Naive thymus-derived CD4-positive, alpha-beta T cell (primary cell): ENCODE measurements at regions of chr6 and their contacts with region 1.

Region 1: DNA sequence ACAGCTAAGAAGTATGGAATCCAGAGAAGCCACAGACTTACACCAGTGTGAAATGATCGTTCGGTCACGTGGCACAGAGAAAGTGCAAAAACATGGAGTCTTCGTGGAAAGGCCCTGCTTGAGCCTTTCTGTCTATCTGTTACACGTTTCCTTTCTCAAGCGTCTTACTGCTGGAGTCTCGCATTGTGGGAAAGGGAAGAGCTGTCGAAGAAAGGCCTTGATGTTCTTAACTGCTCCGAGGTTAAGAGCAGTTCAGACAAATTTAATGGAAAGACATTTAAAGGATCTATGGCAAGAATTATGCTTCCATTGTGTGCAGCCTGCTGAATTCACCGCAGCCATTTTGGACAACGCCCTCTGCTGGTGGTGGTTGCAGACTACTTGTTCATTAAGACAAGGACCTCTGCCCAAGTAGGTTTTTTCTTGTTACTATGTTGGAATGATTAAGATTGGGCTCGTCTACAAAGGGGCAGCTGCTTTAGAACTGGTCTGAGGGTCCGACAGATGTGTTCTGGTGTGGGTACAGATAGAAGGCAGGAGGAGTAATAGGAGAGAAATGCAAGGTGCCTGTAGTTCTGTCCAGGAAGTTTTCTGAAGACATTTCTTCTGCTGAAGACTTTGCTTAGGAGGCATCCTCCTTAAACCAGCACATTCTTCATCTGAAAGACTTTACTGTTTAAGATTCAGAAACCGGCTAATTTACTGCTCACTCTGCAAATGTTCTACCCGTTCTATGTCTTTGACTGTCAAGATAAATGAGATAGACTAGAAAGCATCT is 24.7 kb upstream of the CCN6 start:
- DNase-seq: peak in 7 of 9 donors; percentile 22 to 58 (median 43)
- ATAC-seq: no peak
- H3K4me3 ChIP-seq: no peak overlapping the region
- H3K4me3 Mint-ChIP-seq: peak overlapping the region; percentile 49 to 83 (median 68)
- H3K27ac ChIP-seq: peak overlapping the region; percentile 90
- H3K27ac Mint-ChIP-seq: peak overlapping the region; percentile 95 to 100 (median 98)
- H3K4me1 ChIP-seq: peaks cover 34 to 74% of the 10 kb centered on the region in 2 donors
- H3K4me1 Mint-ChIP-seq: peaks cover 46 to 94% (median 84%) of the 10 kb centered on the region in 7 donors
- H3K27me3 ChIP-seq: no peaks in the 10 kb centered on the region
- H3K27me3 Mint-ChIP-seq: peaks cover 0 to 3% (median 0%) of the 10 kb centered on the region in 5 donors

Region 2: DNA sequence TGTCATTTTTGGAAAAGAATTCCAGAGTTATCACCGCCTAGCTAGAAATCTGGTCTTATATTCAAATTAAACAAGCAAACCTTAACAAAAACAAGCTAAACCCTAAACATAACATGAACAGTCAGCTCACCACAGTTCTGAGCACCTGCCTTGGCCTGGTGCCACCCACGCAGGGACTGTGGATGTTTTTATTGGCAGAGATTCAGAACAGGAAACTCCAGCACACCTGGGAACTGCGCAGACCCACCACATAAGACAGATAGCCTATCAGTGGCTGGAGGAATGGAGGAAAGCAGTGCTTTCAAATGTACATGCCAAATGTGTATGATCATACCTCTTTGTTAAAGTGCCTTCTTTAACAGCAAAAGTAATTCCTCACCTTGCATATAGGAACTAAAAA is 933.0 kb before region 1 on chr6:
- CTCF ChIA-PET with region 1: no interaction called
- POLR2A ChIA-PET with region 1: no interaction called
- intact Hi-C with region 1: loop called in 1 of 2 experiments (anchors 10 kb)
- DNase-seq: peak in 8 of 9 donors; percentile 15 to 85 (median 82)
- ATAC-seq: peak; percentile 90
- H3K4me3 ChIP-seq: no peak overlapping the region
- H3K4me3 Mint-ChIP-seq: peak overlapping the region in 9 of 10 donors; percentile 38 to 82 (median 68)
- H3K27ac ChIP-seq: peak overlapping the region; percentile 45
- H3K27ac Mint-ChIP-seq: peak overlapping the region; percentile 38 to 95 (median 92)
- H3K4me1 ChIP-seq: peaks cover 0 to 30% of the 10 kb centered on the region in 2 donors
- H3K4me1 Mint-ChIP-seq: peaks cover 7 to 68% (median 53%) of the 10 kb centered on the region in 7 donors
- H3K27me3 ChIP-seq: no peaks in the 10 kb centered on the region
- H3K27me3 Mint-ChIP-seq: no peaks in the 10 kb centered on the region

Region 3: GRCh38 chr6:111709615-111710398 is 319.4 kb before region 1 on chr6:
- CTCF ChIA-PET with region 1: interaction called, 3 read pairs
- POLR2A ChIA-PET with region 1: interaction called, 6 read pairs
- intact Hi-C with region 1: loop called (anchors 1 kb)
- DNase-seq: peak in 8 of 9 donors; percentile 43 to 78 (median 71)
- ATAC-seq: peak; percentile 89
- H3K4me3 ChIP-seq: no peak overlapping the region
- H3K4me3 Mint-ChIP-seq: peak overlapping the region in 8 of 10 donors; percentile 2 to 67 (median 53)
- H3K27ac ChIP-seq: peak overlapping the region; percentile 59
- H3K27ac Mint-ChIP-seq: peak overlapping the region; percentile 53 to 98 (median 93)
- H3K4me1 ChIP-seq: peaks cover 32 to 43% of the 10 kb centered on the region in 2 donors
- H3K4me1 Mint-ChIP-seq: peaks cover 32 to 64% (median 56%) of the 10 kb centered on the region in 7 donors
- H3K27me3 ChIP-seq: no peaks in the 10 kb centered on the region
- H3K27me3 Mint-ChIP-seq: no peaks in the 10 kb centered on the region

Region 4: GRCh38 chr6:111973118-111973761 is 56.0 kb before region 1 on chr6:
- CTCF ChIA-PET with region 1: no interaction called
- POLR2A ChIA-PET with region 1: interaction called, 5 read pairs
- intact Hi-C with region 1: loop called in 1 of 2 experiments (anchors 1 kb)
- DNase-seq: peak; percentile 41 to 92 (median 88)
- ATAC-seq: peak; percentile 90
- H3K4me3 ChIP-seq: peak overlapping the region; percentile 17
- H3K4me3 Mint-ChIP-seq: peak overlapping the region; percentile 55 to 82 (median 67)
- H3K27ac ChIP-seq: peak overlapping the region; percentile 95
- H3K27ac Mint-ChIP-seq: peak overlapping the region; percentile 84 to 99 (median 96)
- H3K4me1 ChIP-seq: peaks cover 7 to 77% of the 10 kb centered on the region in 2 donors
- H3K4me1 Mint-ChIP-seq: peaks cover 37 to 95% (median 82%) of the 10 kb centered on the region in 7 donors
- H3K27me3 ChIP-seq: no peaks in the 10 kb centered on the region
- H3K27me3 Mint-ChIP-seq: peaks cover 0 to 10% (median 0%) of the 10 kb centered on the region in 5 donors

Region 5: DNA sequence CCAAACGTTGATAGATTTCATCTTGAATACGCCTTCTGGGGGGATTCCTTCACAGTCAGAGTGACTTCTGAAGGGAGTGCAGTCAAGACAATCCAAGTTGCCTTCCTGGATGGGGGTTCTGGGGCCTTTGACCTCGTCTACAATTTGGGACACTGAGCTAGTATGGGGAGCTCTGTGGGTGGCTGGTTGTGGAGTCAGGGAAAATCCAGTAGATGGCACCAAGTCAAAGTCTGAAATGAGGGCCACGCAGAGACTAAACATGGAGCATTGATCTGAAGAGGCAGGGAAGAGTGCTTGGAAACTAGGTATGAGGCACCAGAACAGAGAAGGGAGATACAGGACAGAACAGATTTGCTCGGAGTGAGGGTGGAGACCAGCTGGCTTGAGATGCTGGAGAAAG is 18.9 kb before region 1 on chr6:
- CTCF ChIA-PET with region 1: interaction called, 48 read pairs
- POLR2A ChIA-PET with region 1: interaction called, 44 read pairs
- intact Hi-C with region 1: loop called (anchors 1 to 2 kb)
- DNase-seq: peak in 5 of 9 donors; percentile 37 to 57 (median 45)
- ATAC-seq: peak; percentile 56
- H3K4me3 ChIP-seq: no peak overlapping the region
- H3K4me3 Mint-ChIP-seq: peak overlapping the region in 1 of 10 donors; percentile 9
- H3K27ac ChIP-seq: no peak overlapping the region
- H3K27ac Mint-ChIP-seq: peak overlapping the region in 7 of 9 donors; percentile 0 to 41 (median 7)
- H3K4me1 ChIP-seq: no peaks in the 10 kb centered on the region
- H3K4me1 Mint-ChIP-seq: peaks cover 6 to 22% (median 14%) of the 10 kb centered on the region in 7 donors
- H3K27me3 ChIP-seq: no peaks in the 10 kb centered on the region
- H3K27me3 Mint-ChIP-seq: no peaks in the 10 kb centered on the region

Region 6: GRCh38 chr6:112018619-112019416 is 10.4 kb before region 1 on chr6:
- CTCF ChIA-PET with region 1: interaction called, 27 read pairs
- POLR2A ChIA-PET with region 1: interaction called, 44 read pairs
- intact Hi-C with region 1: loop called (anchors 1 kb)
- DNase-seq: no peak
- ATAC-seq: no peak
- H3K4me3 ChIP-seq: no peak overlapping the region
- H3K4me3 Mint-ChIP-seq: no peak overlapping the region
- H3K27ac ChIP-seq: no peak overlapping the region
- H3K27ac Mint-ChIP-seq: peak overlapping the region in 3 of 9 donors; percentile 4 to 58 (median 19)
- H3K4me1 ChIP-seq: peaks cover 0 to 5% of the 10 kb centered on the region in 2 donors
- H3K4me1 Mint-ChIP-seq: peaks cover 21 to 80% (median 45%) of the 10 kb centered on the region in 7 donors
- H3K27me3 ChIP-seq: no peaks in the 10 kb centered on the region
- H3K27me3 Mint-ChIP-seq: no peaks in the 10 kb centered on the region

Region 7: GRCh38 chr6:112626468-112627082 is 597.3 kb after region 1 on chr6:
- CTCF ChIA-PET with region 1: no interaction called
- POLR2A ChIA-PET with region 1: no interaction called
- intact Hi-C with region 1: no loop called
- DNase-seq: no peak
- ATAC-seq: no peak
- H3K4me3 ChIP-seq: no peak overlapping the region
- H3K4me3 Mint-ChIP-seq: no peak overlapping the region
- H3K27ac ChIP-seq: no peak overlapping the region
- H3K27ac Mint-ChIP-seq: no peak overlapping the region
- H3K4me1 ChIP-seq: no peaks in the 10 kb centered on the region
- H3K4me1 Mint-ChIP-seq: no peaks in the 10 kb centered on the region
- H3K27me3 ChIP-seq: no peaks in the 10 kb centered on the region
- H3K27me3 Mint-ChIP-seq: no peaks in the 10 kb centered on the region